Posterior vena cava (tissue), 2 donors: ENCODE measurements at regions of chr11 and their contacts with region 1.

Region 1: GRCh38 chr11:64314489-64315226 is 2.7 kb downstream of the TRMT112 start:
- DNase-seq: peak; percentile 71

Region 2: GRCh38 chr11:64352995-64353714 is 38.5 kb after region 1 on chr11:
- intact Hi-C with region 1: loop called in 1 of 2 experiments (anchors 5 kb)
- DNase-seq: no peak